ENCODE measurements at regions of chr19 and their contacts with region 1.

Region 1: GRCh38 chr19:45079063-45079910 is at the start of gene GEMIN7:
- DNase-seq: peak; percentile 64 to 83
- H3K4me3 ChIP-seq: peak within 1 kb of the TSS; percentile 83
- H3K27ac ChIP-seq: peak within 1 kb of the TSS; percentile 48
- H3K4me1 ChIP-seq: peaks cover 32% of the 10 kb centered on the region
- H3K27me3 ChIP-seq: no peaks in the 10 kb centered on the region
- CTCF ChIP-seq: no peak
- total RNA-seq, gene GEMIN7: 29.6 and 30.6 TPM in 2 replicates

Region 2: DNA sequence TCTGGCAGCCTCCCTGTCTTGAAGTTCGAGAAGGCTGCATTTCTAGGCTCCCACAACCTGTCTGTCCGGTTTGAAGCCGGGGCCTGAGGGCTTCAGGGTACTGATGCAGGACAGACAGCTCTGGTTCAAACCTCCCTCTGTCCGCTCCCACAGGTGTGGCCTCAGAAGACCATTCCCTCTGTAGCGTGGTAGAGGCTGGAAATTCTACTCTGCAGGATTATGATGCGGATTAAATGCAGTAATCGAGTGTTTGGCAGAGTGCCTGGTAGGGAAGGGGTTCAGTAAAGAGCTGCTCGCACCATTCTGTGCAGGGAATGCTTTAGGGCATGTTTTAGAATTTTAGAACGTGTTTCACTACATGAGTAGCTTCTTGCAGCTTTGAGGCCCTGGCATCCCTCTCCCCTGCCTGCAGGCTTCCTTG is 44.2 kb after region 1 on chr19:
- CTCF ChIA-PET with region 1: interaction called, 3 read pairs
- POLR2A ChIA-PET with region 1: no interaction called
- intact Hi-C with region 1: loop called (anchors 5 kb)
- DNase-seq: peak; percentile 84 to 96
- H3K4me3 ChIP-seq: no peak overlapping the region
- H3K27ac ChIP-seq: peak overlapping the region; percentile 52
- H3K4me1 ChIP-seq: peaks cover 42% of the 10 kb centered on the region
- H3K27me3 ChIP-seq: no peaks in the 10 kb centered on the region
- CTCF ChIP-seq: no peak

Region 3: DNA sequence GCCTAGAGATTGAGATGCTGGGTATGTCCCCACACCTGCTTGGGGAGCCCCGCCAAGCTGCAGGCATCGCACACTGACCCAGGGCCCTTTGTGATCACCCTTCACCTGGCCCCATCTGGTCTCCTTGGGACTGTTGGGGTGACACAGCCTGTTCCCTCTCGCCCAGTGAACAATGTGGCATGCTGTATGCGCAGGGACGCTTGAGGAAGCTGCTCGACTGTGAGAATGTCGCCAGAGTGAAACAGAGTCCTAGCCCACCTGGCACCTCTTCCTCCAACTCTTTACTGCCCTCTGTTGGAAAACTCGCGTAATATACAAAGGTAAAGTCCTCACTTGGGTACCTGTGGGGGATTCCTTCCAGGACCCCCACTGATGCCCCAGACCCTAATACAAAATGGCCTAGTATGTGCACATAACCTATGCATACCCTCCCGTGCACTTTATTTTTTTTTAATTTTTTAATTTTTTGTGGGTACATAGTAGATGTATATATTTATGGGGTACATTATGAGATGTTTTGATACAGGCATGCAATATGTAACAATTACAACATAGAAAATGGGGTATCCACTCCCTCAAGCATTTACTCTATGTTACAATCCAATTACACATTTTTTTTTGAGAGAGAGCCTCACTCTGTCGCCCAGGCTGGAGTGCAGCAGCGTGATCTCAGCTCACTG is 108.3 kb after region 1 on chr19:
- CTCF ChIA-PET with region 1: no interaction called
- POLR2A ChIA-PET with region 1: no interaction called
- intact Hi-C with region 1: loop called (anchors 2 kb)
- DNase-seq: peak in 1 of 2 experiments; percentile 21
- H3K4me3 ChIP-seq: no peak overlapping the region
- H3K27ac ChIP-seq: no peak overlapping the region
- H3K4me1 ChIP-seq: peaks cover 8% of the 10 kb centered on the region
- H3K27me3 ChIP-seq: no peaks in the 10 kb centered on the region
- CTCF ChIP-seq: peak; percentile 80

Region 4: DNA sequence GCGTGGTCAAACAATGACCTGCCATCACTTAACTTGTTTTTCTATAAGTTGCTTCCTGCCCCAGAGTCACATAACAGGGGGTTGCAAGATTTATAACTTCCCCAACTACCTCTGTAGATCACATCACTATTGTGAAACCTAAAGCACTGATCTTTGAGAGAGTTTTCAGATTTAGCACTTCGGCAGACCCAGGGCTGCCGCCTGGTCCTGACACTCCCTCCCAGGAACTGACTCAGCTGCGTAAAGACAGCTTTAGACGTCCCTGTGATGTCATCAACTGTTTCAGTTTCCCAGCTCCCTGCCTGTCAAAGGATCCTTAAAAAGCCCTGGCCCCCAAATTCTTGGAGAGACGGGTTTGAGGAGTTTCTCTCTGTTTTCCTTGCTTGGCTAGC is 1102.1 kb after region 1 on chr19:
- CTCF ChIA-PET with region 1: no interaction called
- POLR2A ChIA-PET with region 1: no interaction called
- intact Hi-C with region 1: no loop called
- DNase-seq: peak in 1 of 2 experiments; percentile 73
- H3K4me3 ChIP-seq: peak overlapping the region; percentile 8; the same call in 1 of the 2 replicates
- H3K27ac ChIP-seq: peak overlapping the region; percentile 74
- H3K4me1 ChIP-seq: peaks cover 36% of the 10 kb centered on the region
- H3K27me3 ChIP-seq: no peaks in the 10 kb centered on the region
- CTCF ChIP-seq: no peak

Measured in PC-9 (cell line).